ENCODE measurements at regions of chr1 and their contacts with region 1.

Region 1: DNA sequence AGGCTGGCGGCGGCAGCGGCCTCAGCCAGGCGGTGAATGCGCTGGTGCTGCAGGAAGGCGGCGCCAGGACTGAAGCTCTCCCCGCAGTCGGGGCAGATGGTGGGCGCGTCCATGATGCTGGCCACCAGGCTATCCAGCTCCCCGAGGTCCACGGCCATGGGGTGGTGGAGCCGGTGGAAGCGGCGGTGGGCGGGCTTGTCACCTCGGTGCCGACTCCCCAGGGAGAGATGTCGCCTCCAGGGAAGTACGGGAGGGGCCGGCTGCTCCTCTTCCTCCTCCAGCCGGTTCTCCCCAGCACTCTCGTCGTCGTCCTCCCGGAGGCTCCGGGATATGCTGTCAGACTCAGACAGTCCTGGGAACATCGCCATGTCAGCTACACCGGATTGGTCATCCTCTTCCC is 24.4 kb downstream of the ZNF697 start:
- DNase-seq: peak in 1 of 10 donors; percentile 56
- H3K4me3 ChIP-seq: no peak overlapping the region
- H3K27ac ChIP-seq: no peak overlapping the region
- H3K27me3 ChIP-seq: no peaks in the 10 kb centered on the region
- CTCF ChIP-seq: no peak

Region 2: GRCh38 chr1:119367427-119368124 is 256.1 kb before region 1 on chr1:
- intact Hi-C with region 1: no loop called
- DNase-seq: no peak
- H3K4me3 ChIP-seq: no peak overlapping the region
- H3K27ac ChIP-seq: no peak overlapping the region
- H3K27me3 ChIP-seq: no peaks in the 10 kb centered on the region
- CTCF ChIP-seq: peak; percentile 51 to 87 (median 71)

Region 3: DNA sequence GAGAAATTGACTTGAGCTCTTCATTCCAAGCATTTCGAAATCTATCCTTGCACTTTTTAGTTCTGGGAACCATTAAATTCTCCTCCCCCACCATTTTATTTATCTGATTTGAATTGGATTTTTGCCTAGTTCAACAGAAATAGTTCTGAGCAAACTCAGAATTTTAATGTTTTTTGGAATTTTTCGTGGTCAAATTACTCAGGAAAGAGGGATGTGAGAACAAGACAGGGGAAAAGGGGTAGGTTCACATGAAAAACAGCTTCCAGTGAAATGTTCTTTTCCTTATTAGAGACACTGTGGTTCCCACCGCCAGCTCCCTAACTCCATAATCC is 30.1 kb after region 1 on chr1:
- intact Hi-C with region 1: loop called in 1 of 2 experiments (anchors 2 kb)
- DNase-seq: no peak
- H3K4me3 ChIP-seq: no peak overlapping the region
- H3K27ac ChIP-seq: peak overlapping the region in 1 of 59 donors; percentile 1
- H3K27me3 ChIP-seq: peaks cover 0 to 6% (median 0%) of the 10 kb centered on the region in 45 donors
- CTCF ChIP-seq: no peak

Region 4: DNA sequence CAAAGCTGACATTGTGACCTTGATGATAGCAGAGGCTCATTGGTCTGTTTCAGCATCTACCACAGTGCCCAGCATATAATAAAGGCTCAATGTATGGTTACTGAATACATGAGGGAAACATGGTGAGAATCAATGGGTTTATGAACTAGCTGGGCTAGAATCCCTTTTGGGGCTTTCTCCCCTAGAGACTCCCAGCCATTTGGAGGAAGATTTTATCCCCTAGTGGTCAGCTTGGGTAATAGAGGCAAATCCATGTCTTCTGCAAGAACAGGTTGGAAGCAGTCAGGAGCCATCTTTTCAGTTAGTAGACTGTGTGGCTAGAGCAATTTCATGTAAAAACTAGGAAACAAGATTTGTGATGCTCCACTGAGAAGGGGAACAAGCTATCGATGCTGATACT is 203.3 kb after region 1 on chr1:
- intact Hi-C with region 1: no loop called
- DNase-seq: no peak
- H3K4me3 ChIP-seq: no peak overlapping the region
- H3K27ac ChIP-seq: no peak overlapping the region
- H3K27me3 ChIP-seq: peaks cover 0 to 13% (median 0%) of the 10 kb centered on the region in 45 donors
- CTCF ChIP-seq: peak in 13 of 56 donors; percentile 10 to 35 (median 15)

Measured in dorsolateral prefrontal cortex (tissue), 120 donors.